ENCODE measurements at regions of chr6 and their contacts with region 1.

Region 1: DNA sequence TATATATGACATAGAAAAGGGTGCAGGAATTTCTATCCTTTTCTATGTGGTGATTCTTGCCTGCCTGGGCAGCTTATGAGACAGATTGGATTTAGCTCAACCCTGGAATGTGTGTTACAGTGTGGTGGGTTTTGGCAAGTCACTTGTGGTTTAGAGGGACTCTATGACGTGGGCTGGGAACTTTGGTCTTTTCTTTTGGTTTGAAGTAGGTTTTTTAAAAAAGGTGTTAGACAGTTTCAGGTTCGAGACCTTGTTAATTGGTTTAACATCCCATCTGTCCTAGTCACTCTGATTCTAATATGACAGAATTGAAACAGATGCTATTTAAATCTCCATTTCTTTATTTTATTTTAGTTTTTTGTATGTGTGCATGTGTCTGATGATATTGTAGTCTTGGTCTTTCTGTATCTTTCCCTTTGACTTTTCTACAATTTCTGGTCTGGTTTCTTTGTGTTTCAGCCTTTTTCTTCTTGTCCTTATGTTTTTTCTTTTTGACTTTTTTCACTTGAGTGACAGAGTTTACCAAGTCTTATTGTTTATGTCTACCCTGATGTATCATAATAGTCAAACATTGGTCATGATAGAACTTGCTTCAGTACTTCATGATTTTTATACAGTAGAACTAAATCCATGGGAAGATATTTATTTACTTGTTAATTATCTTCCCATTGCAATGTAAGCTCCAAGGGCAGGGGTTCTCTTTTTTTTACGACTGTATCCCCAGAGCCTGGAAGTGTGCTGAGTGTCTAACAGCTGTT is 174.3 kb downstream of the CDKAL1 start:
- DNase-seq: peak; percentile 62
- H3K4me3 Mint-ChIP-seq: no peak overlapping the region
- H3K27ac Mint-ChIP-seq: no peak overlapping the region
- H3K4me1 Mint-ChIP-seq: peaks cover 54% of the 10 kb centered on the region
- H3K27me3 Mint-ChIP-seq: no peaks in the 10 kb centered on the region

Region 2: DNA sequence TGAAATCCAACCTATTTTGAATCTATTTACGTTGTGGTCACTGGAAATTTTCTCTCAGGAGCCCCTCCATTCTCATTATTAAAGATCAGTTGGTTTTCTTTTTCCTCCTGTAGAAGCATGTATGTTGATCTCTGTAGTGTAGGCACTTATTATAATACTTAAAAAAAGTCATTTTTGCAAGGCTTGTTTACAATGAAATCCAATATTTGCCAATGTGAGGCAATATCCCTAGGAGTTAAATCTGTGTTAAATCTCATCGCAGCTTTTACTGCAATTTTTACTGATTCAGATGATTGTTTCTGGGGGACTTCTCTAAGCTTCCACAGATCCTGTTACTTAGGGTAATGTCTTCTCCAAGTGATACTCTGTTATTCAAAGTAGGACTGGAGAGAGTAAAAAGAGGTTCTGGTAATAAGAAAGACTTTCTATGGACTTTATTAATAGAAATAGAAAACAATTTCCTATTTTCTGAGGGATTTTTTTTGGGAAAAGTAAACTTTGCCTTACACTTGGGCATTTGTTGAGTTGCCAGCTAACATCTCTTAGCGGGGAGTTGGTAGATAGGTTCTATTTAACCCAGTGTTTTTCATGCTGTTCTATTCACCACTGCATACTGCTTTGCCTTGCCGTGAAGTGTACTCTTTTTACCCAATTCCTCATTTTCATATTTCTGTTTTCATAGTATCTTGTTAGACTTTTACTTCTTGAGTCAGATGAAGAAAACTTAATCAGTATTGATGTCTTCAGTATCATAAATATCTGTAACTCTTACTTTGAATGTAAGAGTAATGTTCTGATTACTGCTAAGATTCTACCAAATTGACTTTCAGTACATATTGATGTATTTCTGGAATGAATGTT is 125.7 kb before region 1 on chr6:
- CTCF ChIA-PET with region 1: no interaction called
- intact Hi-C with region 1: loop called (anchors 5 kb)
- DNase-seq: no peak
- H3K4me3 Mint-ChIP-seq: no peak overlapping the region
- H3K27ac Mint-ChIP-seq: no peak overlapping the region
- H3K4me1 Mint-ChIP-seq: peaks cover 21% of the 10 kb centered on the region
- H3K27me3 Mint-ChIP-seq: no peaks in the 10 kb centered on the region

Region 3: DNA sequence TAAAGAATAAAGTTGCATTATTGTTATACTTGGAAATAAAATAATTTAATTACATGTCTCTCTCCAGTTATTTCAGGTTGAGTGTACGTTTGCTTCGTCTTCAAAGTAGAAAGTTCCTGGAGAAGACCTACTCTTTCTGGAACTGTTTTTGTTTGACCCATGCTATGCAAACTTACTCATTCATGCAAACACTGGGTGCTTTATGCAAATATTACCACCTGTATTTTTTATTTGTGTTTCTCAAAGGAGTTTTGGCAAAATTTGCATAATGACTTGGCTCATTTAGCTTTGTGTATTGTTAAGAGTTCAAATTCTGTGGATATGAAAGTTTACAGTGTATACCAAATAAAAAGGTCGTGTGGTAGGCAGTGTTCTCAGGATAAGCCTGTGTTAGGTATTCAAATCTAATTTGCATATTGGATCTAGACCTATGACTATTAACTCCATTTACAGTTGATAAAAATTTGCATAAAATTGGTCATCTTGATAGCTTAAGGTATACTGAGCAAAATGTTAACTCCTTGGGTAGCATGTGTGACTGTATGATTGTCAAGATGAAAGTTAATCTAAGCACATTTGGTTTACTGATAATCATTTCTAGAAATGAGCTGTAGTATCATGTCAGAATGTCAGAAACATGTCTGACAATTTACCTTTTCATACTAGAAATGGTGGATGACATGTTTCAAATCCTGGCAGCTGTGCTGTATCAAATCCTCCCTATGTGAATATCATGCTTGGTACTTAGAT is 109.1 kb before region 1 on chr6:
- CTCF ChIA-PET with region 1: no interaction called
- intact Hi-C with region 1: loop called (anchors 1 kb)
- DNase-seq: no peak
- H3K4me3 Mint-ChIP-seq: no peak overlapping the region
- H3K27ac Mint-ChIP-seq: no peak overlapping the region
- H3K4me1 Mint-ChIP-seq: peaks cover 9% of the 10 kb centered on the region
- H3K27me3 Mint-ChIP-seq: no peaks in the 10 kb centered on the region

Region 4: GRCh38 chr6:20688710-20689500 is 19.6 kb before region 1 on chr6:
- CTCF ChIA-PET with region 1: no interaction called
- intact Hi-C with region 1: loop called (anchors 2 kb)
- DNase-seq: peak; percentile 20
- H3K4me3 Mint-ChIP-seq: no peak overlapping the region
- H3K27ac Mint-ChIP-seq: no peak overlapping the region
- H3K4me1 Mint-ChIP-seq: peaks cover 61% of the 10 kb centered on the region
- H3K27me3 Mint-ChIP-seq: no peaks in the 10 kb centered on the region

Region 5: GRCh38 chr6:20877008-20877937 is 168.7 kb after region 1 on chr6:
- CTCF ChIA-PET with region 1: no interaction called
- intact Hi-C with region 1: loop called (anchors 5 kb)
- DNase-seq: peak; percentile 38
- H3K4me3 Mint-ChIP-seq: no peak overlapping the region
- H3K27ac Mint-ChIP-seq: no peak overlapping the region
- H3K4me1 Mint-ChIP-seq: peaks cover 9% of the 10 kb centered on the region
- H3K27me3 Mint-ChIP-seq: no peaks in the 10 kb centered on the region